ENCODE measurements at regions of chr5 and their contacts with region 1.

Region 1: DNA sequence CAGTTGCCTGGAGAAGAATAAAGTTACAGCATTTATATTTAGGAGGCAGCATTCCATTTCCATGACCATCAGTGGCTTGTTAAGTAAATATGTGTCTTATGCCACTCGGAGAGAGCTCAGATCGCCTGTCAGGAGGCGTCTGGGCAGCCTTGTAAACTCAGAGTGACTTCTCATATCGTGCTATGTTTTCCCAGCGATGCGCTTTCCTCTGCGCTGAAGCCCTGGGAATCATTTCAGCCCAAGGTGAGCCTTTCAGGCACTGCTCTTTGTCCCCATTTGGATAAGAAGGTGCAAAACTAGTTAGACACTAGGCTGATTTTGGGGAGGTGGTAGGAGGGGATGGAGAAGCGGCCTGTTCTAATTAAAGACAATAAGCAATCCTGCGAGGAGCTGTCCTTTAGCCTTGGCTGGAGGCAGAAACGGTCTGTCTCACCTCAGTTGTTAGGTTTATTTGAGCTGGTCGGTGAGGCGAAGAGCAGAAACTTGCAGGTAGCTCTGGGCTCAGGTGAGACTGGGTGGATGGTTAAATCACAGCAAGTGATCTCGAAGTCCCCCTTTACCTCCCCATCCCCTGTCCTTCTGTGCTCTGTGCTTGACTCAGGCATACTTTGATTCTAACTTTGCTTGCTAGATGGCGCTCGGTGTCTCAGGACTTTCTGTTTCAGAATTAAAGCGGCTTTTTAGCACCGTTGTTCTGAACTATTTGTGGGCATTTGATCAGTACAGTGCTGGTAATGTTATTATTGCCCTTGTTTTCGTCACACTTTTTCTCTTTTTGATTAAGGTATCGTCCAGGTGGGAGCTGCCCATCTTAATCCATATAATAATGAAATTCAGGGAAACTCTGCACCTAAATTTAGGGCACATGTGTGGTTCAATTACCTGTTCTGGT is 24.6 kb downstream of the NR2F1 start:
- DNase-seq: no peak
- ATAC-seq: peak; percentile 55 to 79
- H3K4me3 ChIP-seq: no peak overlapping the region
- H3K27ac ChIP-seq: no peak overlapping the region
- H3K4me1 ChIP-seq: peaks cover 11% of the 10 kb centered on the region
- H3K27me3 ChIP-seq: peaks cover 89% of the 10 kb centered on the region
- CTCF ChIP-seq: peak; percentile 51

Region 2: DNA sequence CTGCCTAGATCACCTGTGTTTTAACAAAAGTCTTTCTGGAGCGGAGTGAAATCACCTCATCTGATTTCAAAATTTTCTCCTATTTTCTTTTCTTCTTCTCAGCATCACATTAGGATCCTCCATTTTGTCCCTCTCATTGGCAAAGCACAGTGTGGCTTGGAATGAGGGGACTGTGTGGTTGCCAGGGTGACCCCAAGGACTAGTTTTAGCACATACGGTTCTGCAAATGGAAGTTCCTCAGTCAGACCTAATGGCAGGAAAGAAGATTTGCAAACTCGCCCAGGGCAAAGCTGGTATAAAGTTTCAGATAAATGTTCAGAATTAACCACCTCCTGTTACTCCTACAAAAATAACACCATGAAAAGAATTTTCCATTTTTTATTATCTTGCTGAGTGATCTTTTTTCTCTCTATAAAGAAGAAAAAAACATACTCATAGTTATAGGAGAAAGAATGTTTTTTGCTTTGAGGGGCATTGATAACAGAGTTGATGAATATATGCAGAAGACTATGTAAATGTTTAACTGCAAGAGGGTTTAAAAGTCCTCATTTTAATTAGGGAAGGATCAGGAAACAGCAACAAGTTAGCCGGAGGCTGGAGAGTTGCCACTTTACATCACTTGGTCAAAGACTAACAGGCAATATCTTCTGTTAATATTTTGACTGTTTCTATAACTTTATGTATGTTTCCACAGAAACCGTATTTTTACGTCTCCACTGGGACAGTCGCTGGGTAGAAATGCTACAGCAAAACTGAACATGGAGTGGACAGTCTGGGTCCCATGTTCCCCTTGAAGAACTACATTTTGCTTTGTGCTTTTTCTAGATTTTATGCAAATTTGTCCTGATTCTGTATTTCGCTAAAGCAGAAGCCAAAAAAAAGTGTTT is 284.4 kb before region 1 on chr5:
- intact Hi-C with region 1: no loop called
- DNase-seq: no peak
- ATAC-seq: no peak
- H3K4me3 ChIP-seq: no peak overlapping the region
- H3K27ac ChIP-seq: no peak overlapping the region
- H3K4me1 ChIP-seq: no peaks in the 10 kb centered on the region
- H3K27me3 ChIP-seq: no peaks in the 10 kb centered on the region
- CTCF ChIP-seq: no peak

Region 3: DNA sequence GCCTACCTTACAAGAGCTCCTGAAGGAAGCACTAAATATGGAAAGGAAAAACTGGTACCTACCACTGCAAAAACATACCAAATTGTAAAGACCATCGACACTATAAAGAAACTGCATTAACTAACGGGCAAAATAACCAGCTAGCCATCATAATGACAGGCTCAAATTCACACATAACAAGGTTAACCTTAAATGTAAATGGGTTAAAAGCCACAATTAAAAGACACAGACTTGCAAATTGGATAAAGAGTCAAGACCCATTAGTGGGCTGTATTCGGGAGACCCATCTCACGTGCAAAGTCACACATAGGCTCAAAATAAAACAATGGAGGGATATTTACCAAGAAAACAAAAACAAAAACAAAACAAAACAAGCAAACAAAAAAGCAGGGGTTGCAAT is 84.4 kb after region 1 on chr5:
- intact Hi-C with region 1: no loop called
- DNase-seq: no peak
- ATAC-seq: no peak
- H3K4me3 ChIP-seq: no peak overlapping the region
- H3K27ac ChIP-seq: no peak overlapping the region
- H3K4me1 ChIP-seq: no peaks in the 10 kb centered on the region
- H3K27me3 ChIP-seq: no peaks in the 10 kb centered on the region
- CTCF ChIP-seq: no peak

Region 4: DNA sequence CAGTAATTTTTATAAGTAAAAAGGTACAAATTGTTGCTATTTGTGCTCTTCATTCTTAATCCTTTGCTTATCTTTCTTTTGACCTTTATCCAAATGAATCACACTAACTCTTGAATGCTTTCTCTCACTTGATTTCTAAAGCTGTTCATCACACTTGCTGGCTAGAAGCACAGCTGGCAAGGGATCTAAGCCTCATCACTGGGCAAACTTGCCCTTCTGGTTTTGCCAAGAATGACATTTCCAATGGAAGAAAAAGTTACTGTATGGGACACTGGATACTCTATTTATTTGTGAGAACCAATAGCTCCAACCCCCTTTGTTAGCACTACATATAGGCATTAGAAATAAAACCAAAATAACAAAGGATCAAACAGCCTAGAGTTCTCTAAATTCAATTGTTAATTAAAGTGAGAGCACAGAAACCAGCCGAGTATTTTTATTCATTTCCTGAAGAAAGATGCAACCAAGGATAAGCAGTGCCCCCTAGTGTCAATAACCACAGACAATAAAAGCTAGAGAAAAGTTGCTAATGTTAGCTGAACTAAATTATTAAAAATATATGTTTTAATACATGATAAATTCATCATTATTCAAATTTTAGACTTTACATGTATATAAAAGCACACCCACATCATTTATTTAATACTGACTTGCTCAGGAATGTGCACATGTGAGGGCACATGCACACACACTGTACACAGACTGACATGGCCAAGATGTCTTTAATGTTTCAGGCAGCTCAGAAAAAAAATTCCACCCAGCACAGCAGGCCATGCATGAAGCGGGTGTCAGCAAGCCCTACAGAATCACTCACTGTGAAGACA is 193.6 kb after region 1 on chr5:
- intact Hi-C with region 1: loop called (anchors 10 kb)
- DNase-seq: no peak
- ATAC-seq: peak; percentile 30 to 58
- H3K4me3 ChIP-seq: no peak overlapping the region
- H3K27ac ChIP-seq: no peak overlapping the region
- H3K4me1 ChIP-seq: peaks cover 12% of the 10 kb centered on the region
- H3K27me3 ChIP-seq: no peaks in the 10 kb centered on the region
- CTCF ChIP-seq: peak; percentile 70